Activated CD4-positive, alpha-beta T cell treated with anti-CD3 and anti-CD28 coated beads, Interleukin-2, amount 10 ng/mL, durations not matched to agents 24 days and 14 days (primary cell): ENCODE measurements at regions of chr1 and their contacts with region 1.

Region 1: DNA sequence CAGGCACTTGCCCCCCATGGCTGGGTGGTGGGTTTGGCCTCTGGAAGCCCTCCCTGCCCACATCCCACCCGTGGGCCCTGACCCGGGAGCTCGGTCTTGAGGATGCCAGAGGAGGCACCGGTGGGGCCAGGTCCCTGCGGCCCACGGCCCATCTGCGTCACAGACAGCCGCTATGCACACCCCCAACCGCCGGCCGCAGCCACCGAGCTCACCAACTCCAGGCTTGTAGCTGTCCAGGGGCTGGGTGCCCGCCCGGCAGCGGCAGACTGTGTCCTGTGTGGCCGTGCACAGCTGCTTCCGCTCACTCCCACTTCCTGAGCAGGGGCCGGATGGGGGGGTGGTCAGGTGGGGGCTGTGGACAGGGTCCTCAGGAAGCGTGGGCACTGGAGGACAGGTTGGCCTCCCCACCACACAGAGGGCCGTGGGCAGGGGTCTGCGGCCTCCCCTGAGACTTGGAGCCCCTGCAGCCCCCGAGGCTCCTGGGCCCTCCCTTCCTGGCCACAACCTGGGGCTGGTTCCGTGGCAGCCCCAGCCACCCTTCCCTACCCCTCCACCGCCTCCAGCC is 1.1 kb downstream of the TNFRSF4 start:
- DNase-seq: peak; percentile 87
- H3K4me3 Mint-ChIP-seq: peak overlapping the region; percentile 81
- H3K27ac Mint-ChIP-seq: peak overlapping the region; percentile 84
- H3K4me1 Mint-ChIP-seq: peaks cover 54% of the 10 kb centered on the region
- H3K27me3 Mint-ChIP-seq: no peaks in the 10 kb centered on the region

Region 2: DNA sequence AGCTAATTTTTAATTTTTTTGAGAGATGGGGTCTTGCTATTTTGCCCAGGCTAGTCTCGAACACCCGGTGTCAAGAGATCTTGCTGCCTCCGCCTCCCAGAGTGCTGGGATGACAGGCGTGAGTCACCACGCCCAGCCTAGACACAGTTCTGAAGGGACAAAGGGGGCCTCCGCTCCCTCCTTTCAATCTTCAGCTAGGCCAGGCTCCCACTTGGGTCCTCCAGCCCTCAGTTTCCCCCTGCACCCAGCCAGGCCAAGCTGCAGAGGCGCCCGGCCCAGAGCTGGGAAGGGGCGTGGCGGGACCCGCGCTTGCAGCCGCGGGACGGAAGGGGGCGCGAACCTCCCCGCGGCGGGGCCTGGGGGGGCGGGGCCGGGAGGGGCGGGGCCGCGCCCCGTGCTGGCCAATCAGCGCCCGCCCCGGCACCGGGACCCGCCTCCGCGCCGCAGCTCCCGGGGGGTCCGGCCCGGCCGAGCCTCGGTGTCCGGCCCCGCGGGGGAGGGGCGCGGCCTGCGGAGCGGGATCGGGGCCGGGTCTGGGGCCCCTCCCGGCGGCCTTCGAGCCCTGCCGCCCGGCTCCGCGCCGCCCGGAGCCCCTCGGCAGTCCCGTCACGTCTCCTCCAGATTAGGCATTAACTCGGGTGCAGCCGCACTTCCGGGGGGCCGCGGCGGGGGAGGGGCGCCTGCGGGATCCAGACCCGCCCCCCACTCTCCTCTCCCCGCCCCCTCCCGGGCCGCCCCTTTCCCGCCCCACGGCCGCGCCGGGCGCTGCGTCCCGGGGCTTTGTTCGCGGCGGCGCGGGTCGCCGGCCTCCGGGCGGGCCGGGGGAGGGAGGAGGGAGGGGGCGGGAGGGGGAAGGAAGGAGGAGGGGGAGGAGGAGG is 193.5 kb before region 1 on chr1:
- intact Hi-C with region 1: loop called (anchors 10 kb)
- DNase-seq: peak; percentile 94
- H3K4me3 Mint-ChIP-seq: peak overlapping the region; percentile 73
- H3K27ac Mint-ChIP-seq: no peak overlapping the region
- H3K4me1 Mint-ChIP-seq: peaks cover 26% of the 10 kb centered on the region
- H3K27me3 Mint-ChIP-seq: peaks cover 7% of the 10 kb centered on the region

Region 3: GRCh38 chr1:1231400-1232223 is 18.8 kb after region 1 on chr1 and contains the start of gene SDF4:
- intact Hi-C with region 1: loop called (anchors 2 kb)
- DNase-seq: peak; percentile 99
- H3K4me3 Mint-ChIP-seq: peak within 1 kb of the TSS; percentile 91
- H3K27ac Mint-ChIP-seq: peak within 1 kb of the TSS; percentile 86
- H3K4me1 Mint-ChIP-seq: peaks cover 26% of the 10 kb centered on the region
- H3K27me3 Mint-ChIP-seq: no peaks in the 10 kb centered on the region
- total RNA-seq, gene SDF4: 175 and 194 TPM in 2 replicates